ENCODE measurements at regions of chr7 and their contacts with region 1.

Region 1: DNA sequence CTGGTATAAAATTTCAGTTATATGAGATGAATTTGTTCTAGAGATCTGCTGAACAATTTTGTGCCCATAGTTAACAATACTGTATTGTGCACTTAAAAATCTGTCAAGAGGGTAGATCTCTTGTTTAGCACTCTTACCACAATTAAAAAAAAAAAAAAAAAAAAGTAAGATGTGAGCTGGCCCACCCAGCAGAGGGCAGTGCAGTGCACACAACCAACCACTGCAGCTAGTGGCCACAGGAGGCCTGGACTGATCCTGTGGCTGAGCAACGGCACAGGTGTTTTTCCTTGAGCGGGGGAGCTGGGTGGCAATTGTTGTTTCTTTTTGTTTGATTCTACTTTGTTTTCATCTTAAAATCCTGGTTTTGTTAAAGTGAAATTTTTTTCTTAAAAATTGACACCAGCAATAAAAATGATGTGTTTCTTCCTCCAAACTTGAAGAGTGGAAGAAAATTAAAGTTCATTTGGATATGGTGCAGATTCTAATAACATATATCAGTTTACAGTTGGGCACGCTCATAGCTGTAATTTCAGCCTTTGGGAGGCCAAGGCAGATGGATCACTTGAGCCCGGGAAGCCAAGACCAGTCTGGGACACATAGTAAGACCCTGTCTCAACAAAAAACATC is 171.1 kb upstream of the TBX20 start:
- DNase-seq: peak; percentile 47 to 72 (median 64)
- H3K4me3 ChIP-seq: no peak overlapping the region
- H3K27ac ChIP-seq: no peak overlapping the region
- H3K4me1 ChIP-seq: no peaks in the 10 kb centered on the region
- H3K27me3 ChIP-seq: no peaks in the 10 kb centered on the region
- CTCF ChIP-seq: peak; percentile 63 to 93 (median 80)
- POLR2A ChIP-seq: no peak

Region 2: DNA sequence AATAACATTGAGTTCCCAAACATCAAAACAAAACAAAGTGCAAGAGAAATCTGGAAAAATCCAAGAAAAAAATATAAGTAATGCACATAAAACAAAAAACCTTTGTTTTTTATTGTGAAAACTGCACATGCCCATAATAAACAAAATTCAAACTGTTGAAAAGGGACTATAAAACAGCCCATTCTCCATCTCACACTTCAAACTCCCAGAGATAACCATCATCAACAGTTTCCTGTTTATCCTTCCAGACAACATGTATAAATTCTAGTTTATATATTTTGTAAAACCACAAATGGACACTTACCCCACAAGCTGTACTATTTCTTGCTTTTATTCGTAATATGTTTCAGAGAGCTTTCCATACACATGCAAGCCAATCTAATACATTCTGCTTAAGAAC is 467.0 kb before region 1 on chr7:
- intact Hi-C with region 1: no loop called
- DNase-seq: no peak
- H3K4me3 ChIP-seq: no peak overlapping the region
- H3K27ac ChIP-seq: no peak overlapping the region
- H3K4me1 ChIP-seq: no peaks in the 10 kb centered on the region
- H3K27me3 ChIP-seq: no peaks in the 10 kb centered on the region
- CTCF ChIP-seq: no peak
- POLR2A ChIP-seq: no peak

Region 3: GRCh38 chr7:35530124-35531109 is 105.4 kb after region 1 on chr7:
- intact Hi-C with region 1: loop called in 1 of 2 experiments (anchors 5 kb)
- DNase-seq: no peak
- H3K4me3 ChIP-seq: no peak overlapping the region
- H3K27ac ChIP-seq: no peak overlapping the region
- H3K4me1 ChIP-seq: no peaks in the 10 kb centered on the region
- H3K27me3 ChIP-seq: no peaks in the 10 kb centered on the region
- CTCF ChIP-seq: no peak
- POLR2A ChIP-seq: no peak

Measured in adrenal gland (tissue), 19 donors.